ENCODE measurements at regions of chr18 and their contacts with region 1.

Region 1: GRCh38 chr18:49021433-49022129 is 70.8 kb upstream of the SMAD7 start:
- DNase-seq: peak; percentile 85
- H3K4me3 Mint-ChIP-seq: no peak overlapping the region
- H3K27ac Mint-ChIP-seq: no peak overlapping the region
- H3K4me1 Mint-ChIP-seq: peaks cover 3% of the 10 kb centered on the region
- H3K27me3 Mint-ChIP-seq: no peaks in the 10 kb centered on the region

Region 2: DNA sequence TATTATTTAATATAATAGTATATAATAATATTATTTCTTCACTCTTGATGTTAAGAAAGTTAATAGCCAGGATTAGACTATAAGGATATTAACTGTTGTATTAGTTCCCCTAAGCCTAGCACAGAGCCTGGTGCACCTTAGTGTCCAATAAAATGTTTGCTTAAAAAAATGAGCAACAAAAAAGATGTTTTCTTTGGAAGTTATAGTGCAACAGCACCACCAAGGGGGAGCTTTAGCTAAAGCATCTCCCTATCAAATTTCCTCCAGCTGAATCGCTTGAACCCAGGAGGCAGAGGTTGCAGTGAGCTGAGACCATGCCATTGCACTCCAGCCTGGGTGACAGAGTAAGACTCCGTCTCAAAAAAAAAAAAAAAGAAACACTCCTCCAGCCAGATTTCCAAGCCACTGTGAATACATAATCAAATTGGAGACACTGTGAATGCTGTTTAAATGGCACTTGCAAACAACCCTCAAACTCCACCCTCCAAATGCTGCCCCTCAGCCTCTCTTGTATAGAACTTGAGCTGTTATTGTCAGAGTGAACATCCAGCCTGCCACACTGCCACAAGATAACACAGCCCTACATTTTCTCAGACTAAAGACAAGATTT is 217.0 kb after region 1 on chr18:
- intact Hi-C with region 1: loop called (anchors 5 kb)
- DNase-seq: peak; percentile 73
- H3K4me3 Mint-ChIP-seq: no peak overlapping the region
- H3K27ac Mint-ChIP-seq: no peak overlapping the region
- H3K4me1 Mint-ChIP-seq: peaks cover 5% of the 10 kb centered on the region
- H3K27me3 Mint-ChIP-seq: no peaks in the 10 kb centered on the region

Region 3: DNA sequence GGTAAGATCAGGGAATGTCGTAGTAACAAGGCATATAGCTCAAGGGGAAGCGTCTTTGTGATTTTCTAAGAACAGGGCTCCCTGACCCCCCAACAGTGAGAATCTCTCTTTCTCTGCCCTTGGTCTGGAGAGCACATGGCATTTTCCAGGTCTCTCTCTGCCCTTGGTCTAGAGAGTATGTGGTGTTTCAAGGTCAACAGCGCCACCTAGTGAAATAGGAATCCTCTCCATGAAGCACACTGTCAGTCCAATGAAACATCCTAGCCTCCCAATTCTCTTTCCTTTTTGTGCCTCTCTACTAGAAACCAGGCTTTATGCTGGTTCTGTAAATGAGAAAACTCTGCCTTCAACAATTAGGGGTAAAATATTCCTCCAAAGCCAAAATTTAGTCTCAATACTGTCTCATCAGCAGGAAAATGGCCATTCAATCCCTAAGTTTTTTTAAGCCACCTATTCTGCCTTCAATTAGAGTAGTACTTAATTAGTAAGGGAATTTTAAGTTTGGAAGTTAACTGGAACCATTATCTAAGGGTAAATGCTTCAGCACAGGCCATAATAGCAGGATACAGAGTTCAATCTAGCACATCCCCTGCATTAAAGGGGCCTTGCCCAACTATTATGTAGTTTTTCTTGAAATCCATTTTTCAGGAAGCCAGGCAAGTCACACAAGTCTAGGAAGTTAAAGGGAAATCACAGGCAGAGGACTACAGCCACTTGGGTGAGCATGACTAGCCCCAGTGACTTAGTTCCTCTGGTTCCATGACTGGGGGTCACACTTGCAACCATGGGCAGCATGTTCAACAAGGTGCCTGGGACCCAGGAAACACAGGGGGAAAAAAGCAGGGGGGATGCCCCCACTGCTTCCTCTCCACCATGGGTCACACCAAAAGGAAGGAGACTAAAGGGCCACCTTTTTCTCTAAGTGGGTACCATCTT is 426.5 kb after region 1 on chr18:
- intact Hi-C with region 1: loop called (anchors 1 kb)
- DNase-seq: peak; percentile 86
- H3K4me3 Mint-ChIP-seq: no peak overlapping the region
- H3K27ac Mint-ChIP-seq: no peak overlapping the region
- H3K4me1 Mint-ChIP-seq: peaks cover 14% of the 10 kb centered on the region
- H3K27me3 Mint-ChIP-seq: no peaks in the 10 kb centered on the region

Measured in activated CD4-positive, alpha-beta T cell treated with anti-CD3 and anti-CD28 coated beads, Interleukin-2, amount 10 ng/mL, durations not matched to agents 24 days and 14 days (primary cell).